CD8-positive, alpha-beta T cell (primary cell): ENCODE measurements at regions of chr20 and their contacts with region 1.

Region 1: DNA sequence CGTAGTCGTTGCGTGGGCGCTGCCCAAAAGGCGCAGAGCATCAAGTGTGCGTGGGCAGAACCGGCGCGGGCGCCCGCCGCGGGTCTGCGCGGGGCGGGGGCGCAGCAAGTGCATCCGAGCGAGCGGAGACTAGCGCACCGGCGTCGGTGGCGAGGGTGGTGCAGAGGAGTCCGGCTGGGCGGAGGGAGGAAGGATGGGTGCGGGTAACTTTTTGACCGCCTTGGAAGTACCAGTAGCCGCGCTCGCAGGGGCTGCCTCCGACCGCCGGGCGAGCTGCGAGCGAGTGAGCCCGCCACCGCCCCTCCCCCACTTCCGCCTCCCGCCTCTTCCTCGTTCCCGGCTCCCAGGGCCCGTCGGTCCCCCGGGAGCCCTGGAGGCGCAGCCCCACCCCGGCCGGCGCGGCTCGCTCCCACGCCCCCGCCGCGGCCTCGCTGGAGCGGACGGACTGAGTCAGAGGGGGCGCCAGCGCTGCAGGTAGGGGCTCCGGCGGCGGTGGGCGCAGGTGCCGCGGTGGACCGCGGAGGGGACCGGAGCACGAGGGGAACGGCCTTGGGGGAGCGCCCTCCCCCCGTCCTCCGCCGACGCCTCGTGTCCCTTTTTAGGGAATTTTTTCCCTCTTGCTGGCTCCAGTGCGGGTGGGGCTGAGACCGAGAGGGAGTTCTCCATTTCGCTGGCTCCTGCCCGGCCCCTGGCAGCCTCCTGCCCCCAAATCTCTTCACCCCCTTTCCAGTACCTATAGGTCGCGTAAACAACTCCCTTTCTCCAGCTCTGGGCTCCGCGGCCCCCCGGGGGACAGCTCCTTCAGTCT is 1.6 kb upstream of the DBNDD2 start:
- DNase-seq: peak in 7 of 9 experiments; percentile 31 to 69 (median 46)
- ATAC-seq: peak; percentile 50
- H3K4me3 ChIP-seq: peak overlapping the region; percentile 66 to 73
- H3K4me3 Mint-ChIP-seq: peak overlapping the region; percentile 82
- H3K27ac ChIP-seq: peak overlapping the region; percentile 33 to 73
- H3K27ac Mint-ChIP-seq: peak overlapping the region; percentile 88
- H3K4me1 ChIP-seq: peaks cover 16% of the 10 kb centered on the region
- H3K4me1 Mint-ChIP-seq: peaks cover 23% of the 10 kb centered on the region
- H3K27me3 ChIP-seq: no peaks in the 10 kb centered on the region
- H3K27me3 Mint-ChIP-seq: no peaks in the 10 kb centered on the region
- CTCF ChIP-seq: no peak

Region 2: DNA sequence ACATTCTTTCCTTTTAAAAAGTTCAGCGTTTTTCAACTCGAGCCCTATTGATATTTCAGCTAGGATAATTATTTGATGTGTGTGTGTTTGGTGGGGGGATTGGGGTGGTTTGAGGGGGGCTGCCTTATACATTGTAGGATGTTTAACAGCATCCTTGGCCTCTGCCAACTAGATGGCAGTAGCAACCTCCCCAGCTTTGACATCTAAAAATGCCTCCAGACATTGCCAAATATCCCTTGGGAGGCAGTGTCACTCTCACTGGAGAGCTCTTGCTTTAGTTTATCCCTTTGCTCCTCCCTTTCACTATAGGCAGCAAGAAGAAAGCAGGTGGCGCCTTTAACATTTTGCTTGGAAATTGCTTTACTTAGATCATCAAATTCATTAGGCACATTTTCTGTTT is 13.7 kb before region 1 on chr20:
- CTCF ChIA-PET with region 1: no interaction called
- POLR2A ChIA-PET with region 1: interaction called, 3 read pairs
- intact Hi-C with region 1: loop called in 1 of 2 experiments (anchors 2 kb)
- DNase-seq: no peak
- ATAC-seq: no peak
- H3K4me3 ChIP-seq: no peak overlapping the region
- H3K4me3 Mint-ChIP-seq: no peak overlapping the region
- H3K27ac ChIP-seq: no peak overlapping the region
- H3K27ac Mint-ChIP-seq: no peak overlapping the region
- H3K4me1 ChIP-seq: no peaks in the 10 kb centered on the region
- H3K4me1 Mint-ChIP-seq: no peaks in the 10 kb centered on the region
- H3K27me3 ChIP-seq: no peaks in the 10 kb centered on the region
- H3K27me3 Mint-ChIP-seq: no peaks in the 10 kb centered on the region
- CTCF ChIP-seq: no peak

Region 3: GRCh38 chr20:45456632-45457031 is 50.2 kb after region 1 on chr20:
- CTCF ChIA-PET with region 1: no interaction called
- POLR2A ChIA-PET with region 1: no interaction called
- intact Hi-C with region 1: no loop called
- DNase-seq: peak in 2 of 9 experiments; percentile 29 to 41
- ATAC-seq: peak; percentile 48
- H3K4me3 ChIP-seq: no peak overlapping the region
- H3K4me3 Mint-ChIP-seq: no peak overlapping the region
- H3K27ac ChIP-seq: no peak overlapping the region
- H3K27ac Mint-ChIP-seq: no peak overlapping the region
- H3K4me1 ChIP-seq: no peaks in the 10 kb centered on the region
- H3K4me1 Mint-ChIP-seq: no peaks in the 10 kb centered on the region
- H3K27me3 ChIP-seq: no peaks in the 10 kb centered on the region
- H3K27me3 Mint-ChIP-seq: no peaks in the 10 kb centered on the region
- CTCF ChIP-seq: peak; percentile 27